Dorsolateral prefrontal cortex (tissue), 120 donors: ENCODE measurements at regions of chr6 and their contacts with region 1.

Region 1: GRCh38 chr6:33788694-33789549 is at the start of gene LEMD2:
- DNase-seq: peak; percentile 83 to 96 (median 90)
- H3K4me3 ChIP-seq: peak within 1 kb of the TSS; percentile 33 to 98 (median 83)
- H3K27ac ChIP-seq: peak within 1 kb of the TSS; percentile 75 to 99 (median 95)
- H3K27me3 ChIP-seq: no peaks in the 10 kb centered on the region
- CTCF ChIP-seq: peak in 38 of 56 donors; percentile 4 to 66 (median 34)
- total RNA-seq, gene LEMD2: 37.1 to 79.5 (median 56.7) TPM

Region 2: GRCh38 chr6:33417903-33418689 is 370.8 kb before region 1 on chr6 and contains the start of gene CUTA:
- intact Hi-C with region 1: loop called in 1 of 2 experiments (anchors 10 kb)
- DNase-seq: peak; percentile 100
- H3K4me3 ChIP-seq: peak within 1 kb of the TSS; percentile 57 to 97 (median 86)
- H3K27ac ChIP-seq: peak within 1 kb of the TSS; percentile 52 to 99 (median 97)
- H3K27me3 ChIP-seq: no peaks in the 10 kb centered on the region
- CTCF ChIP-seq: peak in 55 of 56 donors; percentile 31 to 79 (median 62)
- total RNA-seq, gene CUTA: 118 to 222 (median 177) TPM

Region 3: DNA sequence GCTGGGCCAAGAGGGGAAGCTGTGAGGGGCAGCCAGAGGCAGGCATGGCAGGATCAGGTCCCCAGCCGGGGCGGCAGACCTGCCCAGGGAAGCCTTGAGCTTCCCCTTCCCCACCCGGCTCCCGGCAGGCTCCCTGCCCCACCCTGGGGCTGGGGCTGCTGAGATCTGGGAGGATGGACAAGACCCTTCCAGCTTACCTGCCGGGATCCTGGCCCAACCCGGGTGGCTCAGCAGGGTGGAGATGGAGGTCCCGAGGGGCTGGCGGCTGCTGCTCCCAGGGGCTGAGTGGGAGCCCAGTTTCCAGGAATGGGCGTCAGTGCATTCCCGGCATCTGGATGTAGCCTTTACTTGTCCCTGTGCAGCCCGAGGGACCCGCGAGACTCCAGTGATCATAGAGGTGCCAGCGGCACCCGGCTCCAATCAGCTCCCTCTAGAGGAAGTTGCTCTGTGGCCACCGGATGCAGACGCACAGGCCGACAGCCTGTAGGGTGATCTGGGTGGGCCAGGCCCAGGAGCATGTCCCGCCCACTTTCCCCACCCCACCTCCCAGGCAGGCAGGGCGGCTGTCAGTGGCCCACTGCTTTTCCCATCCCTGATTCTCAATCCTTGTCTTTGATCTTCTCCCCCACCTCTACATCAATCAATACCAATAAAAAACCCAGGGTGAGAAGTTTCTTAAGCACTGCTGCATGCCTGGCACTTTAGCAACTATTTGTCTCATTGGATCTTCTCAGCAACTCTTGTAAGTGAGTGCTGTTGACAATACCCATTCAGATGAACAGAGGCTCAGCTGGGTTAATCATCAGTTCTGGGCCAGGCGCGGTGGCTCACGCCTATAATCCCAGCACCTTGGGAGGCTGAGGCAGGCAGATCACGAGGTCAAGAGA is 208.9 kb before region 1 on chr6 and contains the start of gene BAK1:
- intact Hi-C with region 1: loop called in 1 of 2 experiments (anchors 10 kb)
- DNase-seq: peak; percentile 79 to 97 (median 94)
- H3K4me3 ChIP-seq: peak within 1 kb of the TSS; percentile 65 to 97 (median 86)
- H3K27ac ChIP-seq: peak within 1 kb of the TSS; percentile 31 to 96 (median 86)
- H3K27me3 ChIP-seq: no peaks in the 10 kb centered on the region
- CTCF ChIP-seq: peak; percentile 28 to 81 (median 66)
- total RNA-seq, gene BAK1: 6.4 to 17.0 (median 10.8) TPM

Region 4: GRCh38 chr6:33633462-33634158 is 155.3 kb before region 1 on chr6:
- intact Hi-C with region 1: no loop called
- DNase-seq: peak in 6 of 10 donors; percentile 31 to 69 (median 51)
- H3K4me3 ChIP-seq: peak overlapping the region; percentile 33 to 71 (median 56)
- H3K27ac ChIP-seq: peak overlapping the region in 9 of 59 donors; percentile 3 to 73 (median 31)
- H3K27me3 ChIP-seq: no peaks in the 10 kb centered on the region
- CTCF ChIP-seq: no peak

Region 5: DNA sequence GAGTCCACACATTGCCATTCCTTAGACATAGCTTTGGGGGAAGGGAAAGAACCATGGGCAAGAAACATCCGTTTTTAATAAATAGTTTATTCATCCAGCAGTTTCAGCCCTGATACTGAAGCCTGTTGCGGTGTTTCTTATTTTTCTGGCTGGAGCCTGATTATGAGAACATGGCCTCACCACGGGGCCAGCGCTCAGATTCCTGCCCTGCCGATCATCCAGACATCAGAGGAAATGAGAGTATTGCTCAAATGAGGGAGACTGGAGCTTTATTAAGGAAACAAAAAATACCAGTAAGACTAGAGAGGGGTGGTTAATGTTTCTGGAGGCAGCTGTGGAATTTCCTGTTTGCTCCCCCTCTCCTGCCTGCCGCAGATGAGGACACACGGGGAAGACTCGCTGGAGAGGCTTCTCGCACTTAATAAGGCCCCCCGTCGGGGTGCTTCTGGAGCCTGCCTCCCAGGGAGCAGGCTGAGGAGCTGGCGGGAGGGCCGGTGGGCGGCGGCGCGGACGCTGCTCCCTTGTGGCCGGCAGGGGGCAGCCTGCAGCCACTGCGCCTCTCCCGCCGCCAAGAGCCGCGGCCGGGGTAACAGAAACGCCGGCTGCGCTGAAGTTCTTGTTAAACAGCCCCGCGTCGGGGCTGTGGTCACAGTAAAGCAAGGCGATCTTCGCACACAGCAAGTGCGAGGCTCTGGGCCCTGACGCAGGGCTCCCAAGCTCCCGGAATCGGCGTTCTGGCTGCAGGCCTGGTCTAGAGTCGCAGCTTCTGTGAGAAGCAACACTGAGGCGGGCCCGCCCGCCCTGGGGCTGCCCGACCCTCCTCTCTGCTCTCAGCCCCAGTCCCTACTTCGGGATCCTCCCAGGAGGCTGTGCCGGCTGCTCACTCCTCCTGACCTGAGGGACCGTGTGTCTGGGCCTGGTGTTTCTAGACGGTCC is 17.5 kb before region 1 on chr6:
- intact Hi-C with region 1: loop called in 1 of 2 experiments (anchors 2 kb)
- DNase-seq: peak in 8 of 10 donors; percentile 32 to 83 (median 58)
- H3K4me3 ChIP-seq: peak overlapping the region in 11 of 59 donors; percentile 3 to 36 (median 15)
- H3K27ac ChIP-seq: peak overlapping the region in 53 of 59 donors; percentile 3 to 85 (median 61)
- H3K27me3 ChIP-seq: no peaks in the 10 kb centered on the region
- CTCF ChIP-seq: peak; percentile 72 to 98 (median 94)

Region 6: GRCh38 chr6:34953061-34954025 is 1164.4 kb after region 1 on chr6:
- intact Hi-C with region 1: no loop called
- DNase-seq: no peak
- H3K4me3 ChIP-seq: no peak overlapping the region
- H3K27ac ChIP-seq: no peak overlapping the region
- H3K27me3 ChIP-seq: no peaks in the 10 kb centered on the region
- CTCF ChIP-seq: no peak